Activated T-helper 2 cell treated with anti-CD3 and anti-CD28 coated beads, Interferon-gamma antibody, Interleukin-2, Interleukin-4, amounts not matched to agents 10 μg/mL and 5 μg/mL and 100 μg/mL, durations not matched to agents 14 hours and 24 hours and 36 hours (primary cell): ENCODE measurements at regions of chr6 and their contacts with region 1.

Region 1: DNA sequence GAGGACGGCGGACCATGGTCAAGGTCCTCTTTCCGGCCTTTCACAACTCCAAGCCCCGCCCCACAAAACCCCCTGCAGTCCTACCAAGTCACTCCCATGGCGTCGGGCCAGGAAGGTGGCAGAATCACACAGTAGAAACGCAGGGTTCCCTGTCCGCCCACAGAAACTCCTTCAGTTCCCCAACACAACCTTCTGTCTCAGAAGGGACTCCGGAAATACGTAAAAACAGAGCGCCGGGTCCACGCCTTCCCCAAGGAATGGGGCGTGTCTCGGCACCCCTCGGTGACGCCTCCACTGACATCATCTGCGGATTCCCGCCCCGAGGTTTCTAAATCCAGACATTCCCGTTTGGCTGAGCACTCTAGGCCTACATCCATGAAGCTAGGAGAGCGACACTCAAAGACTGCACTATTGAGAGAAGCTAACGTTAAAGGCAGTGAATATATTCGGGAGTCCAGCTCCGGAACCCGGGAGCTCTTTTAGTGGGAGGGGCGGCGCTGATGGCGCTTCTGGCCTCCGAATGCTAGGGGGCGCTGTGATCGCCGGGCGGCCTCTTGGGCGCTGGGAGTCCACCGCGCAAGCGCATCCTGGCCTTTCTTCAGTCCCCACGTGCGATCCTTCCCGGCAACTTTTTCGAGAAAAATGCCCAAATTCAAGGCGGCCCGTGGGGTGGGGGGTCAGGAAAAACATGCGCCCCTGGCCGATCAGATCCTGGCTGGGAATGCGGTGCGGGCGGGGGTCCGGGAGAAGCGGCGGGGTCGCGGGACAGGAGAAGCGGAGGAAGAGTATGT is at the starts of genes BYSL and MED20:
- DNase-seq: peak; percentile 90
- H3K4me3 Mint-ChIP-seq: peak within 1 kb of the TSS; percentile 97
- H3K27ac Mint-ChIP-seq: peak within 1 kb of the TSS; percentile 98
- H3K4me1 Mint-ChIP-seq: peaks cover 45% of the 10 kb centered on the region
- H3K27me3 Mint-ChIP-seq: no peaks in the 10 kb centered on the region
- total RNA-seq, gene BYSL: 58.2 and 60.5 TPM in 2 replicates
- total RNA-seq, gene MED20: 23.7 and 24.3 TPM in 2 replicates

Region 2: DNA sequence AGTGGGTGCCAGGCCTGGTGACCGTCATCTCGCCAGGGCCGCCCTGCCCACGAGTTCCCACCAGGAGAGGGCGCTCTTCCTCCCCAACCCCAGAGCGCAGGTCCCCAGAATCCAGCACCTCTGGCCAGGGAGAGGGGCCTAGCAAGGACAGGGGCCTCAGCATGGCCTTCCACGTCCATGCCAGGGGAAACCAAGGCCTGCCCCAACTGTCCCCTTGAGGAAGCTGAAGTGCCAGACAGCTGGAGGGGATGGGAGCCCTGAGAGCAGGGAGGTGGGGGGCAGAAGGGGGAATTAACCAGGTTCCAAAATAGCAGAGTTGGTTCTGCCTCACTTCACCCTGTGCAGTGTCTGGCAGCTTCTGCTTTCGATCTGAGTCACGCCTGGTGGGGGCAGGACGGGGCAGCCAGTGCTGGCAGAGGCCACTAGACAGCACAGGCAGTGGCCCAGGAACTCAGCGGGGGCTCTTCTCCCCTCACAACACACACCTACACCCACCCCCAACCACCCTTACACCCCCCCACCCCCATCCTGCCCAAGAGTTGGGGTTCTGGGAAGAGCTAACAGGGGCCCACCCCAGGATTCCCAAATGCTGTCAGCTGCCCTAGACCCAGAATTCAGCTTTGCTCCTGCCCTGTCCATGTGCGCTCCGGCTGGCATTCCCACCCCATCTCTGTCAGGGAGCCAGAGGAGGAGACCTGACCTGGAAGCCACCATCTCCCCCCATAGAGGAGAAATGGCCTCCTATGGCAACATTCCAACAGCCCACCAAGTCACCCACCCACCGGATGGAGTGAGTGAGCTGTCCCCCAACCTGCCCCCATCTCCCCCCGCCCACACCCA is 214.9 kb before region 1 on chr6:
- intact Hi-C with region 1: no loop called
- DNase-seq: peak; percentile 43
- H3K4me3 Mint-ChIP-seq: no peak overlapping the region
- H3K27ac Mint-ChIP-seq: peak overlapping the region; percentile 43
- H3K4me1 Mint-ChIP-seq: peaks cover 23% of the 10 kb centered on the region
- H3K27me3 Mint-ChIP-seq: no peaks in the 10 kb centered on the region

Region 3: DNA sequence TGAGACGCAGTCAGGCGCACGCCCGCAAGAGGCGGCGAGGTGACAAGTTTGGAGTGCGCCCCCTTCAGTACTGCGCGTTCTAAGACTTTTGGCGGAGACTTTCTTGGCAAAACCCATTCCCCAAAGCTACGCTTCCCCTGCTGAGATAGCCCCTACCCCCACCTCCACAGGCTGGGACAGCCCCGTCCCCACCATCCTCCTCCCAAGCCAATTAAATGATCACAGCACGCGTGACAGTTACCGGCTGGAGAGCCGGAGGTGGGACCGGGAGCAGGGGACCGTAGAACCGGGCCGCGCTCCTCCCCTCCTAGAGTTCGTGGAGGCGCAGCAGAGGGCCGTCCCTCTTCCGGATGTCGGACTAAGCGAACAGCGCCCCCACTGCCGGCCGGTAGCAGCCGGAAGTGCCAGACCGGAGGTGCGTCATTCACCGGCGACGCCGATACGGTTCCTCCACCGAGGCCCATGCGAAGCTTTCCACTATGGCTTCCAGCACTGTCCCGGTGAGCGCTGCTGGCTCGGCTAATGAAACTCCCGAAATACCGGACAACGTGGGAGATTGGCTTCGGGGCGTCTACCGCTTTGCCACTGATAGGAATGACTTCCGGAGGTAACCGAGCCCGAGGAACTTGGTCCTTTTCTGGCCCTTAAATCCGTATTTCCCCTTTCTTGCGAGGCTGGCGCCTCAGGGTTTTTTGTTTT is 133.7 kb before region 1 on chr6 and contains the start of gene TOMM6:
- intact Hi-C with region 1: loop called (anchors 1 kb)
- DNase-seq: peak; percentile 95
- H3K4me3 Mint-ChIP-seq: peak within 1 kb of the TSS; percentile 96
- H3K27ac Mint-ChIP-seq: peak within 1 kb of the TSS; percentile 97
- H3K4me1 Mint-ChIP-seq: peaks cover 15% of the 10 kb centered on the region
- H3K27me3 Mint-ChIP-seq: peaks cover 3% of the 10 kb centered on the region
- total RNA-seq, gene TOMM6: 308 and 316 TPM in 2 replicates

Region 4: DNA sequence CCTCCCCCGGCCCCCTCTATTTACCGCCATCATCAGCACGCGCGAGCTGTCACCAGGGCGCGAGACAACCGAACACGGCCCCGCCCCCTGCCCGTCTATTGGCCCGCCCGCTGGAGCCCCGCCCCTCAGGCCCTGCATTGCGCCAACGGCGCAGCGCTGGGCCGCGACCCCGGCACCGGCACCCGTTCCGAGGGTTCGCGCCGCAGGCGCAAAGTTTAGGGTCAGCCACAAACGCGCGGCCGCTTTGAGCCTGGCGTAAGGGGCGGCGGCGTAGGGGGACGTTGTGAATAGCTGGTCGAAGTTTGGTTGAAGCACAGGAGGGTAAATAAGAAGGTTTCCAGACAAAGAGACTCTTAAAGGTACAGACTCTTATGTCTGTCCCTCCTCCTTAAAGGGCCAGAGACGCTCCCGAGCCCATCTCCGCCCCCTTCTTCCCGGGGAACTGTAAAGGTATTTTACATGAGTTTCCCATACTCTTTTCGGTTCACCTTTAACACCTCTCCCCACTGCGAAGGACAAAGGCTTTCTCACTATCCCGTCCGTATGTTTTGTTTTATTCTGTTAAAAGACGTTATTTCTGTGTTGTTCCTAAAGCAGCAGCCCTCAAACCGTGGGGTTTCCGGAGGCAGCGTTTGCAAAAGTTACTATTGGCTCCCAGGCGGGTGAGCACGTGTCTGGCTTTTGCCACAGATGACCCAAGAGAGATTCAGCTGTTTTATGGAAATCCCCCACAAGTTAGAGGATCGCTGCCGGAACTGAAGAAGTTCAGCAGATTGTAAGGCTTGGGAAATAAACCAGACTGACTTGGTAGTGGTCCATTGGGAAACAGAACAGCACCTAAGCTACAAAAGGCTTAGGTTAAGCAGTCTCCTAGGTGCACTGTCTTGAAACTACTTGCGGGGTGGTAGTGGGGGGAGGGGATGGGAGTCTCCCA is 25.5 kb before region 1 on chr6 and contains the start of gene USP49:
- intact Hi-C with region 1: loop called (anchors 1 kb)
- DNase-seq: peak; percentile 86
- H3K4me3 Mint-ChIP-seq: no peak within 1 kb of the TSS
- H3K27ac Mint-ChIP-seq: peak within 1 kb of the TSS; percentile 88
- H3K4me1 Mint-ChIP-seq: peaks cover 8% of the 10 kb centered on the region
- H3K27me3 Mint-ChIP-seq: no peaks in the 10 kb centered on the region
- total RNA-seq, gene USP49: 6.1 and 6.4 TPM in 2 replicates

Region 5: DNA sequence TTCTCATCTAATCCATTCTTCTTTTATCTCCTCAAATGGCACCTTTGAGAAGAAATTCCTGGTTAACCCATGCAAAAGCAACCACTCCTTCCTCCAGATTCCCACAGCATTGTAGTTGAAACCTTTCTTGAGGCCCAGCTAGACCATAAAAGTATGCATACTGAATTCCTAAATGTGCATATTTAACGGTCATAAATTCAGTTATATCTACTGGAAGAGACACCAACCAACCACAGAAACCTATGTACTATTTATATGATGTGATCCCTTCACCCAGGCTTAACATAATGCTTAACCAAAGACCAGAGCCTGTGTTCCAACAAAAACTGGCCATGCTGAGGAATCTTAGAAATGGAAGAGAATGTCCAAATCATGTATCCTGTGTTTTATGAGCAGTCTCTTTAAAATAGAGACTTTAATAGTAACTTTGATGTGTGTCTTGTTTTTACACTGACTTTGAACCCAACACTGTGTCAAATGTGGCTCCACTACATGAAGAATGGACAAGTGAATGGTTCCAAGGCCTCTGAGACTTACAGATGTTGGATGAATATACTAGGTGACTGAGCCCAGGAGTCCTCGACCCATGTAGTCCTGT is 117.8 kb after region 1 on chr6:
- intact Hi-C with region 1: loop called (anchors 1 kb)
- DNase-seq: no peak
- H3K4me3 Mint-ChIP-seq: peak overlapping the region; percentile 64
- H3K27ac Mint-ChIP-seq: peak overlapping the region; percentile 93
- H3K4me1 Mint-ChIP-seq: peaks cover 59% of the 10 kb centered on the region
- H3K27me3 Mint-ChIP-seq: no peaks in the 10 kb centered on the region